Activated B cell treated with CpG ODN at 0.5 μM for 24 hours (primary cell): ENCODE measurements at regions of chr1 and their contacts with region 1.

Region 1: DNA sequence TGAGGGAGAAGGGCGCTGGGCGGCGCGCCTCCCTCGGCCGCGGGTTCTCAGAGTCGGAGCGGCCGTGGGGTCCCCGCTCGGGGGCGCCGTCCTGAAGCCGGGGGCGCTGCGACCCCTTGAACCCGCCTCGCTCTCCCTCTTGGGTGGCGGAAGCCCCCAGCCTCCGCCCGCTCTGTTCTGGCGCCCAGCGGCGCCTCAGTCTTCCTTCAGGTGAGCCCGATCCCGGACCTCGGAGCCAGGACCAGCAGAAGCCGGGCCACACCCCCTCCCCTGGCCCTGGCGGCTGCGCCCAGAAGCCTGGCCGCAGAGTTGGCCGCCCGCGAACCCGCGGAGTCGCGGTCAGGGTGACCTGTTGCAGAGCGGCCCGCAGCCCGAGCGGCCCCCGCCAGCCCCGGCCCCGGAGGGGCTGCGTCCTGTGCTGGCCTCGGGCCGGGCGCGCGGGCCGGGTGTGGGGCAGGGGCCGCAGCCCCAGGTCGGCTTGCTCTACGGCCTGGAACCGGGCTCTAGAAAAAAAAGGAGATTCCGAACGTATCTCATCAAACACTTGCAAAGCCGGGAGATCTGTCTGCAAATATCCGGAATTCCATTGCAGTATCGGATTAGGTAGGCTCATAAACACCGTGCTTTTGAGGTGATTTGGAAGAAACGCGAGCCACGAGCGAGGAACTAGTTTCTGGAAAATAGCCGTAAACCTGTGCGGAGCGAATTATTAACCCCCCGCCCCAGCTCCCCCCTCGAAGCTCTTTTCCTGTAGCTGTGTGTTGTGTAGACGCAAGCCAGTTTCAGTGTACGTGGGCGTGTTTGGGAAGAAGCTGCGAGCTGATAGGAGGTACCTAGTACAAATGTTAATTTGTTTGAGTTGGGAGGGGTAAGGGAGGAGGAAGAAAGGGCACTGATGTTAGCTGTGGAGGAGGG is 816 bp downstream of the RALGPS2 start:
- DNase-seq: peak; percentile 53
- ATAC-seq: peak; percentile 74
- H3K4me3 Mint-ChIP-seq: peak overlapping the region; percentile 92
- H3K27ac Mint-ChIP-seq: peak overlapping the region; percentile 96
- H3K4me1 Mint-ChIP-seq: peaks cover 55% of the 10 kb centered on the region
- H3K27me3 Mint-ChIP-seq: no peaks in the 10 kb centered on the region
- CTCF ChIP-seq: no peak

Region 2: GRCh38 chr1:178075333-178075732 is 650.5 kb before region 1 on chr1:
- CTCF ChIA-PET with region 1: no interaction called
- POLR2A ChIA-PET with region 1: no interaction called
- intact Hi-C with region 1: no loop called
- DNase-seq: no peak
- ATAC-seq: no peak
- H3K4me3 Mint-ChIP-seq: no peak overlapping the region
- H3K27ac Mint-ChIP-seq: no peak overlapping the region
- H3K4me1 Mint-ChIP-seq: no peaks in the 10 kb centered on the region
- H3K27me3 Mint-ChIP-seq: peaks cover 12% of the 10 kb centered on the region
- CTCF ChIP-seq: no peak

Region 3: DNA sequence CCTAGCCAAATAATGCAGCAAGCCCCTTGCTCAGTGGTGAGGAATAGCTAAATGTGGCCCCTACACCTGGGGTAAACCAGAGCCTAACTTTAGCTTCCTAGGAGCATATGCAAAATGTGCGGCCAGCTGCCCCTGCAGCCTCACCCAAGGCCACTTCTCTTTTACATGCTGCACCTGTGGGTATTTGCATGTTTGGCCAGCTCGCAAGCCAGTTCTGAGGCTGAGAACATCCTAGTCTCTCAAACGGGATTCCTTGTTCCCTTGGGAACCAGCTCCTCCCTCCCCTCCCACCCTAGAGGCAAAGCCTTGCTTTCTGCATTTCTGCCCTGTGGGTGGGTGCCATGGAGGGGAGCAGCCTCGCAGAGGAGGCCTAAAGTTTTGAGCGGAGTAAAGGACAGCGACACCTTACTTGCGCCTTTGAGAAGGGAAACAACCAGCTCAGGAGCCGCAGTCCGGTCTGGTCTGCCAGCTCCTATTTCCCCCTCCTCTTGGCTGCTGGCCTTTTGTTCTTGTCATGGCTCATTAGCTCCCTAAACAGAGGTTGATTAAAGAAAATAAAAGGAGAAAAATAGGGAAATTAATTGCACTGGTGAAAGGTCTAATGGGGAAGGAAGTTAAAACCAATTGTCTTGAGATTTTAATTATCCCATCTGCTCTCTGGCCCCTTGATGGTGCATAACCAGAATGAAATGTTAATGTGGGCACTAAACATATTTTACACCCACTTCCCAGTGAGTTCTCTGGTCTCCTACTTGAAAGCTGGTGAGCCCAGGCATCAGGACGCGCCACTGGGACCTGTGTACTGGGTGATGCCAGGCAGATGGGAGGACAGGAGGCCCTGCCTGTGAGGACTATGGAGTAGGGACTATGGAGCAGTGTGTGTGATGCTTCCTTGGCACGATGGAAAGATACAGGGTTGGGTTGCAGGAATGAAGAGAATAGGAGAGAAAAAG is 144.2 kb before region 1 on chr1:
- CTCF ChIA-PET with region 1: interaction called, 10 read pairs
- POLR2A ChIA-PET with region 1: interaction called, 100 read pairs
- intact Hi-C with region 1: loop called (anchors 1 kb)
- DNase-seq: peak; percentile 57
- ATAC-seq: peak; percentile 56
- H3K4me3 Mint-ChIP-seq: peak overlapping the region; percentile 66
- H3K27ac Mint-ChIP-seq: peak overlapping the region; percentile 98
- H3K4me1 Mint-ChIP-seq: peaks cover 93% of the 10 kb centered on the region
- H3K27me3 Mint-ChIP-seq: no peaks in the 10 kb centered on the region
- CTCF ChIP-seq: no peak

Region 4: DNA sequence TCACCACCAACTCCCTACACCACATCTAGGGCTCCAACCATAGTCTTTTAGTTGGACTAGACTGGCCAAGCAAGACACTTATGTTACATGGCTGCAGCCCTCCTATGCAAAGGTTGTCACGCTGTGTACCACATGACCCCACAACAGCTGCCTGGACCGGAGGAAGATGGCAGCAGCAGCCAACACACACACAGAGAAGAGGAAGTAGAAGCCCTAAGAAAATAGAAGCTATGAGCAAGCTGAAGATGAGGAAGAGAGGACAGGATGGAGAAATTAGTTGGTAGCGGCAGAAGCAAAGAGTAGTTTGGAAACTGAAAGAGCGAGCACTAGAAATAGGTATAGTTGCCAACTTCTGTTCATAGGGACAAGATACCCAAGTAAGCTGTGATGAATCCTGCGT is 61.6 kb before region 1 on chr1:
- CTCF ChIA-PET with region 1: interaction called, 5 read pairs
- POLR2A ChIA-PET with region 1: interaction called, 17 read pairs
- intact Hi-C with region 1: loop called (anchors 1 kb)
- DNase-seq: peak; percentile 28
- ATAC-seq: peak; percentile 83
- H3K4me3 Mint-ChIP-seq: peak overlapping the region; percentile 69
- H3K27ac Mint-ChIP-seq: peak overlapping the region; percentile 86
- H3K4me1 Mint-ChIP-seq: peaks cover 91% of the 10 kb centered on the region
- H3K27me3 Mint-ChIP-seq: no peaks in the 10 kb centered on the region
- CTCF ChIP-seq: no peak

Region 5: GRCh38 chr1:178706432-178706831 is 19.4 kb before region 1 on chr1:
- CTCF ChIA-PET with region 1: no interaction called
- POLR2A ChIA-PET with region 1: interaction called, 4 read pairs
- intact Hi-C with region 1: loop called (anchors 2 kb)
- DNase-seq: no peak
- ATAC-seq: no peak
- H3K4me3 Mint-ChIP-seq: no peak overlapping the region
- H3K27ac Mint-ChIP-seq: no peak overlapping the region
- H3K4me1 Mint-ChIP-seq: peaks cover 49% of the 10 kb centered on the region
- H3K27me3 Mint-ChIP-seq: no peaks in the 10 kb centered on the region
- CTCF ChIP-seq: no peak

Region 6: GRCh38 chr1:178916448-178917174 is 190.8 kb after region 1 on chr1:
- CTCF ChIA-PET with region 1: no interaction called
- POLR2A ChIA-PET with region 1: no interaction called
- intact Hi-C with region 1: no loop called
- DNase-seq: no peak
- ATAC-seq: no peak
- H3K4me3 Mint-ChIP-seq: no peak overlapping the region
- H3K27ac Mint-ChIP-seq: peak overlapping the region; percentile 54
- H3K4me1 Mint-ChIP-seq: peaks cover 74% of the 10 kb centered on the region
- H3K27me3 Mint-ChIP-seq: no peaks in the 10 kb centered on the region
- CTCF ChIP-seq: no peak

Region 7: GRCh38 chr1:179025125-179025974 is 299.5 kb after region 1 on chr1 and contains the start of gene FAM20B:
- CTCF ChIA-PET with region 1: no interaction called
- POLR2A ChIA-PET with region 1: interaction called, 3 read pairs
- intact Hi-C with region 1: loop called (anchors 2 kb)
- DNase-seq: peak; percentile 90
- ATAC-seq: peak; percentile 84
- H3K4me3 Mint-ChIP-seq: peak within 1 kb of the TSS; percentile 90
- H3K27ac Mint-ChIP-seq: peak within 1 kb of the TSS; percentile 90
- H3K4me1 Mint-ChIP-seq: peaks cover 43% of the 10 kb centered on the region
- H3K27me3 Mint-ChIP-seq: no peaks in the 10 kb centered on the region
- CTCF ChIP-seq: no peak
- total RNA-seq, gene FAM20B: 26.3 and 27.5 TPM in 2 replicates